H1 (cell line): ENCODE measurements at regions of chr3 and their contacts with region 1.

Region 1: GRCh38 chr3:13648060-13649001 is 99.4 kb downstream of the FBLN2 start:
- DNase-seq: peak; percentile 84 to 99
- H3K4me3 ChIP-seq: 0 out of 8 replicates have a peak overlapping the region, but pooled peaks of 1 of the 4 experiments have one; percentile 14
- H3K27ac ChIP-seq: peak overlapping the region; percentile 95
- H3K4me1 ChIP-seq: peaks cover 0 to 9% (median 4%) of the 10 kb centered on the region in 4 experiments; a peak in 4 of 7 replicates
- H3K27me3 ChIP-seq: peaks cover 0 to 6% (median 2%) of the 10 kb centered on the region in 4 experiments; a peak in 3 of 7 replicates
- CTCF ChIP-seq: peak in 2 of 3 experiments; percentile 97 to 100; a peak in 3 of 4 replicates
- EP300 ChIP-seq: peak in 1 of 2 experiments; percentile 99; a peak in 2 of 3 replicates
- POLR2A ChIP-seq: no peak
- RAD21 ChIP-seq: peak; percentile 99 to 100

Region 2: GRCh38 chr3:13461169-13462158 is 186.9 kb before region 1 on chr3:
- CTCF ChIA-PET with region 1: interaction called, 10 read pairs
- POLR2A ChIA-PET with region 1: no interaction called
- DNase-seq: peak; percentile 90 to 97
- H3K4me3 ChIP-seq: no peak overlapping the region
- H3K27ac ChIP-seq: no peak overlapping the region
- H3K4me1 ChIP-seq: peaks cover 0 to 2% (median 0%) of the 10 kb centered on the region in 4 experiments; a peak in 2 of 7 replicates
- H3K27me3 ChIP-seq: peaks cover 3 to 10% (median 9%) of the 10 kb centered on the region in 4 experiments; a peak in 6 of 7 replicates
- CTCF ChIP-seq: peak; percentile 97 to 100 (median 99)
- EP300 ChIP-seq: 0 out of 3 replicates have a peak, but pooled peaks of 1 of the 2 experiments have one; percentile 20
- POLR2A ChIP-seq: no peak
- RAD21 ChIP-seq: peak; percentile 86 to 92

Region 3: GRCh38 chr3:13495921-13496723 is 152.2 kb before region 1 on chr3:
- CTCF ChIA-PET with region 1: interaction called, 772 read pairs
- POLR2A ChIA-PET with region 1: interaction called, 4 read pairs
- DNase-seq: peak; percentile 54 to 91
- H3K4me3 ChIP-seq: no peak overlapping the region
- H3K27ac ChIP-seq: no peak overlapping the region
- H3K4me1 ChIP-seq: peaks cover 0 to 3% (median 1%) of the 10 kb centered on the region in 4 experiments; a peak in 2 of 7 replicates
- H3K27me3 ChIP-seq: no peaks in the 10 kb centered on the region
- CTCF ChIP-seq: peak in 2 of 3 experiments; percentile 98; a peak in 3 of 4 replicates
- EP300 ChIP-seq: no peak
- POLR2A ChIP-seq: no peak
- RAD21 ChIP-seq: peak; percentile 99 to 100

Region 4: DNA sequence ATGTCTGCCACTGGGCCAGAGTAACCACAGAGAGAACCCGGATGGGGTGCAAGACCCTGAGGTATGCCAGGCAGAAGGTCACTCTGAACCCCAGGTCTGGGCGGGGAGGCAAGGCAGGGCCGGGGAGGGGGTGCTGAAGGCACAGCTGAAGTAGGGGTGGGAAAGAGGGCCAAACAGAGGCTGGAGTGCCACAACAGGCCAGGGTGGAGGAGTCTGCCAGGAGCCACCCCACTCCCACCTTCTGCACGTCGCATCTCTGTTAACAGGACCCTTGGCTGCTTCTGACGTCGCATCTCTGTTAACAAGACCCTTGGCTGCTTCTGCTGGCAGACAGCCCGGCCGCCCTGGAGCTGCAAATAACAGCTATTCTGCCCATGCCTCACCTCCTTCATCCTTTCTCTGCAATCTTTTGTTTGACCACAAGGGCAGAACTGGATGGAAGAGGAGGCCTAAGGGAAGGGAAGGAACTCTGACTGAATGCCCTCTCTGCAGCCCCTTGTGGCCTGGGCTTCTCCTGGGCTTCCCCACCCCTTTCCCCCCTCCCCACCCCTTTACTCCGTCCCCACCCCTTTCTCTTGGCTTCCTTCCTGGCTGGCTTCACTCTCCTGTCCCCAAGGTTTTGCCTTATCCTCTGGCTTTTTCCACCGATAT is 120.0 kb before region 1 on chr3:
- CTCF ChIA-PET with region 1: interaction called, 20 read pairs
- POLR2A ChIA-PET with region 1: no interaction called
- DNase-seq: peak in 1 of 2 experiments; percentile 46
- H3K4me3 ChIP-seq: no peak overlapping the region
- H3K27ac ChIP-seq: no peak overlapping the region
- H3K4me1 ChIP-seq: peaks cover 0 to 20% (median 12%) of the 10 kb centered on the region in 4 experiments; a peak in 6 of 7 replicates
- H3K27me3 ChIP-seq: no peaks in the 10 kb centered on the region
- CTCF ChIP-seq: peak; percentile 28 to 86 (median 78)
- EP300 ChIP-seq: no peak
- POLR2A ChIP-seq: no peak
- RAD21 ChIP-seq: peak; percentile 38 to 52; a peak in 3 of 4 replicates

Region 5: DNA sequence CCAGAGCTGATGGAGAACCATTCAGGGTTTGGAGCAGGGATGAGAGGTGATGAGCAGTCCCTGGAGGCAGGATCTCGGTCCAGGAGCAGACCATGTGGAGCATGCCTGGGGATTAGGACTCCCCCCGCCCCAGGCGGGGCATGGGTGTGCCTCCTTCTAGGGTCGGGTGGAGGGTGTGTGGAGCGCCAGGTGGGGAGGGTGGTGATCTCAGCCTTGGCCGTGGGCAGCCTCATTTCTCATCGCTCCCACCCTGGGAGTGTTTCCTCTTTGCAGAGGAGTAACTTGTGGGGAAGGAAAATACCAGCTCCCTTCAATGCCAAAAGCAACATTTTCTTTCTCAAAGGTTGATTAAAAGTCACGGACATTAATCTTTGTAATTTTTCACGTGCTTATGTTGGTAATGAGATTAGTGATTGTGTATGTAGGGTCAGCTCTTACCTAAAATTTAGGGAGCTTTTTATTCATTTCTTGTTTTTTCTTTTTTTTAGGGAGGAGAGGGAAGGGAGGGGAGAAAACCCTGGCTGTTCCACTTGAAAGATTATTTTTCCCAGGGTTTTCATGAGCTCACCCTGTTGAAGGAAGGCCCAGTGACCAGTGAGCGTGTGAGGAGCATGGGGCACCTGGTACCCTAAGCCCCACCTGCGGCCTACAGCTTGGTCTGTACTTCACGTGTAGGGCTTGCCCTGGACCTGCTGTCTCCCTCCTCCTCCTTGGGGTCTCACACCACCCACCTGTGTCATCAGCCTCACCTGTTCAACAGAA is 88.4 kb before region 1 on chr3:
- CTCF ChIA-PET with region 1: interaction called, 14 read pairs
- POLR2A ChIA-PET with region 1: no interaction called
- DNase-seq: no peak
- H3K4me3 ChIP-seq: no peak overlapping the region
- H3K27ac ChIP-seq: no peak overlapping the region
- H3K4me1 ChIP-seq: peaks cover 0 to 12% (median 4%) of the 10 kb centered on the region in 4 experiments; a peak in 5 of 7 replicates
- H3K27me3 ChIP-seq: no peaks in the 10 kb centered on the region
- CTCF ChIP-seq: no peak
- EP300 ChIP-seq: no peak
- POLR2A ChIP-seq: no peak
- RAD21 ChIP-seq: no peak

Region 6: GRCh38 chr3:13687517-13687943 is 39.2 kb after region 1 on chr3:
- CTCF ChIA-PET with region 1: interaction called, 14 read pairs
- POLR2A ChIA-PET with region 1: interaction called, 3 read pairs
- DNase-seq: no peak
- H3K4me3 ChIP-seq: no peak overlapping the region
- H3K27ac ChIP-seq: no peak overlapping the region
- H3K4me1 ChIP-seq: peaks cover 2 to 15% (median 8%) of the 10 kb centered on the region in 4 experiments; a peak in 6 of 7 replicates
- H3K27me3 ChIP-seq: peaks cover 0 to 2% (median under 1%) of the 10 kb centered on the region in 4 experiments; a peak in 3 of 7 replicates
- CTCF ChIP-seq: no peak
- EP300 ChIP-seq: no peak
- POLR2A ChIP-seq: no peak
- RAD21 ChIP-seq: no peak